ENCODE measurements at regions of chr12 and their contacts with region 1.

Region 1: DNA sequence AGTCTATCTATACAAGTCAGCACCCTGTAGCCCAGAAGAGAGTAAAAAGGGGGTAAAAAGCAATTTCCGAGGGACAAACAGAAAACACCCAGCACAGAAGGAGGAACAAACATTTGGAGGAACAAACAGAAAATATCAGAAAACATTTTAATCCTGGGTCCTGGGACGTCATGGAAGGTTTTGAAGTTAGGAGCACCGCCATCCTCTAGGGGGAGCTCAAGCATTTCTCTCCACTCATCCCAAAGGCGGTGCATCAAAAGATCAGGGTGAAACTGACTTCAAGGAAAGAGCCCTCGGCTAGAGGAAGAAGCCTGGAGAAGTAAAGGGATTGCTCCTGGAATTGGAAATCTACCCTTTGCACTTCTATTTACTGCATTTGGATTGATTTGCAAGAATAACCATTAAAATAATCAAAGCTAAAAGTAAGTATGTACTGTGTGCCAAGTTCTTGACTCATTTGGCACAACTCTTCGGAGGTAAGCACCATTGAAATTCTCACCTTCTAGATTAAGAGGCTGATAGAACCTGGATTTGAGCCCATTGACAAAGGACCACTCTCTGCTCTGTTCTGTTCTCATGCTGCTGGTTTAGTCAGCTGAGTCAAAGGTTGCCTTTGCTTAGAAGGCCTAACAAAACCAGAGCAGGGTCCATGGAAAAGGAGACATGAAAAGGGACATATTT is 17.2 kb upstream of the POC1B start:
- DNase-seq: peak; percentile 91
- H3K4me3 ChIP-seq: no peak overlapping the region
- H3K27ac ChIP-seq: no peak overlapping the region
- H3K4me1 ChIP-seq: peaks cover 12 to 22% (median 18%) of the 10 kb centered on the region in 4 donors
- H3K27me3 ChIP-seq: no peaks in the 10 kb centered on the region
- CTCF ChIP-seq: peak; percentile 77 to 90 (median 81)
- EP300 ChIP-seq: no peak
- POLR2A ChIP-seq: no peak

Region 2: GRCh38 chr12:89405626-89406345 is 137.3 kb before region 1 on chr12:
- intact Hi-C with region 1: no loop called
- DNase-seq: peak; percentile 37
- H3K4me3 ChIP-seq: no peak overlapping the region
- H3K27ac ChIP-seq: no peak overlapping the region
- H3K4me1 ChIP-seq: no peaks in the 10 kb centered on the region
- H3K27me3 ChIP-seq: no peaks in the 10 kb centered on the region
- CTCF ChIP-seq: no peak
- EP300 ChIP-seq: no peak
- POLR2A ChIP-seq: no peak

Region 3: DNA sequence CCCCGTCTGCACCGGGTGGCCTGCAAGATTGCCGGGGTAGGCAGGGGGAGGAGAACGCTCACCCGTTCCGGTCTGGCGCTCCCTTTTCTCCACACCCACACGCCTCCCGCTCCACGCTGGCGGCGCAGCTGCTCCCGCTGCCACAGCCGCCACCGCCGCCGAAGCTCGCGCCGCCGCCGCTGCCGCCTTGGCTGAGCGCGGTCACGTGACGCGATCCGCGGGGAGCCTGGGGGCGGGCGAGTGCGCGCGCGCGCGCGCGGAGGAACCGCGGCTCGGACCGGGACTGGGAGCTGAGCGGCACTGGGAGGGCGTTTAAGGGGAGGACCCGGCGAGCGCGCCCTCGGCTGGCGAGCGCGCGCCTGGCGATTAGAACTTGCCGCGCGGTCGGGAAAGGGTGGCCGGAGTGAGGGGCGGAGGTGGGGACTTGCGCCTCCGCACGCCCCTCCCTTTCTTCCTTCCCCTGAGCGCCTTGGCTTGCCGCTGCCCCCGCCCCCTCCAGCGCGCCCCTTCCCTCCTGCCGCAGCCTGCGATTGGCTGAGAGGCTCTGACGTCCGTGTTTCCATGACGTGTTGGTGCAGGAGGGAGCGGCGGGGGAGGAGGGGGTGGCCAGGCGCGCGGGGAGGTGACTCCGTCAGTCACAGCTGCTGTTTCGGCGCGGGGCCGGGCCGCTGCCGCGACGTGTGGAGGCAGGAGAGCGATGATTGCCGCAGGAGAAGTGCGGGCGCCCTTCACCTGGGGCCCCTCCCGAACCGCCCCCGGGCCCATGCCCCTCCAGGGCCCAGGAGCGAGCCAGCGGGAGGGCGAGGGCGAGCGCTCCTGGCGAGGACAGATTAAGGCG is 166.3 kb after region 1 on chr12:
- intact Hi-C with region 1: loop called (anchors 5 kb)
- DNase-seq: peak; percentile 100
- H3K4me3 ChIP-seq: peak overlapping the region; percentile 72 to 97 (median 90)
- H3K27ac ChIP-seq: peak overlapping the region; percentile 95 to 99 (median 98)
- H3K4me1 ChIP-seq: peaks cover 13 to 35% (median 19%) of the 10 kb centered on the region in 4 donors
- H3K27me3 ChIP-seq: no peaks in the 10 kb centered on the region
- CTCF ChIP-seq: no peak
- EP300 ChIP-seq: peak; percentile 83
- POLR2A ChIP-seq: peak; percentile 95

Region 4: GRCh38 chr12:90102957-90103652 is 560.1 kb after region 1 on chr12:
- intact Hi-C with region 1: loop called (anchors 5 kb)
- DNase-seq: no peak
- H3K4me3 ChIP-seq: no peak overlapping the region
- H3K27ac ChIP-seq: no peak overlapping the region
- H3K4me1 ChIP-seq: no peaks in the 10 kb centered on the region
- H3K27me3 ChIP-seq: no peaks in the 10 kb centered on the region
- CTCF ChIP-seq: peak; percentile 33 to 48 (median 39)
- EP300 ChIP-seq: no peak
- POLR2A ChIP-seq: no peak

Region 5: GRCh38 chr12:90854136-90854689 is 1311.2 kb after region 1 on chr12:
- intact Hi-C with region 1: loop called (anchors 10 kb)
- DNase-seq: no peak
- H3K4me3 ChIP-seq: no peak overlapping the region
- H3K27ac ChIP-seq: no peak overlapping the region
- H3K4me1 ChIP-seq: peaks cover 0 to 7% (median 0%) of the 10 kb centered on the region in 4 donors
- H3K27me3 ChIP-seq: no peaks in the 10 kb centered on the region
- CTCF ChIP-seq: peak; percentile 35 to 63 (median 52)
- EP300 ChIP-seq: no peak
- POLR2A ChIP-seq: no peak